Heart right ventricle (tissue), 16 donors: ENCODE measurements at regions of chr6 and their contacts with region 1.

Region 1: DNA sequence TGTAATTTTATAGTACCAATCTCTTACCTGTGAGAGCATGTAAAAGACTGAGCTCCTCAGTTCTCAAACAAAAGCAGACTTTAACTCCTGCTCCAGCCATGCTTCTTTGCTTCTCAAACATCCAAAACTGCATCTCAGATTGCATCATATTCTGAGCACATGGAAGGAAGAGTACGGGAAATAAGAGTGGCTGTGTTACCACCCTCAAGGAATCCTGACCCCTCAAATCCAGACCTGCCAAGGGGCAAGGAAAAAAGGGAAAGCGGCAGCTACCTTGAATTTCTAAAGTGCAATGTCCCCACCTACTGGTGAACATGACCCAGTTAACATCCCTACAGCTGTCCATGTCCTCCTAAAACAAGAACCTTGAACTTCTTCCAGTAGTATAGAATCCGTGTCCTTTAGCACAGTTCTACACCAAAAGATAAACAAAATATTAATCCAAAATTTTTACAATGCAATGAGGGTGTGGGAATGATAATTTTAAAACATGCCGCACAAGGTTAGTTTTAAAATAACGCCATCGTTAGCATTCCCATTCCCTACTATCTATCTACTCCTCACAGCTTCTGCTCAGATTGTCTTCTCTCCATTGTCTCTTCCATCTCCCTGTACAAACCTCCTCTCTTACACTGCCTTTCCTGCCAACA is 34.1 kb upstream of the HLA-DQB1 start:
- DNase-seq: peak in 1 of 2 donors; percentile 58
- ATAC-seq: peak in 7 of 8 donors; percentile 61 to 92 (median 82)
- H3K4me3 ChIP-seq: no peak overlapping the region
- H3K27ac ChIP-seq: no peak overlapping the region
- H3K4me1 ChIP-seq: no peaks in the 10 kb centered on the region
- H3K27me3 ChIP-seq: peaks cover 0 to 48% (median 32%) of the 10 kb centered on the region in 7 donors
- CTCF ChIP-seq: peak in 8 of 9 donors; percentile 56 to 76 (median 71)

Region 2: GRCh38 chr6:32255199-32256153 is 445.0 kb before region 1 on chr6:
- intact Hi-C with region 1: loop called in 1 of 10 experiments (anchors 10 kb)
- DNase-seq: peak; percentile 71 to 79
- ATAC-seq: peak; percentile 91 to 99 (median 98)
- H3K4me3 ChIP-seq: peak overlapping the region in 9 of 10 donors; percentile 11 to 48 (median 37)
- H3K27ac ChIP-seq: peak overlapping the region; percentile 64 to 94 (median 84)
- H3K4me1 ChIP-seq: peaks cover 0 to 32% (median 10%) of the 10 kb centered on the region in 9 donors
- H3K27me3 ChIP-seq: peaks cover 0 to 10% (median 0%) of the 10 kb centered on the region in 7 donors
- CTCF ChIP-seq: peak; percentile 40 to 90 (median 79)

Region 3: GRCh38 chr6:32413427-32414047 is 287.0 kb before region 1 on chr6:
- intact Hi-C with region 1: loop called in 9 of 10 experiments (anchors 2 to 5 kb)
- DNase-seq: peak; percentile 72 to 84
- ATAC-seq: peak; percentile 57 to 90 (median 81)
- H3K4me3 ChIP-seq: no peak overlapping the region
- H3K27ac ChIP-seq: no peak overlapping the region
- H3K4me1 ChIP-seq: peaks cover 0 to 12% (median 4%) of the 10 kb centered on the region in 9 donors
- H3K27me3 ChIP-seq: peaks cover 0 to 74% (median 54%) of the 10 kb centered on the region in 7 donors
- CTCF ChIP-seq: peak; percentile 85 to 98 (median 96)

Region 4: DNA sequence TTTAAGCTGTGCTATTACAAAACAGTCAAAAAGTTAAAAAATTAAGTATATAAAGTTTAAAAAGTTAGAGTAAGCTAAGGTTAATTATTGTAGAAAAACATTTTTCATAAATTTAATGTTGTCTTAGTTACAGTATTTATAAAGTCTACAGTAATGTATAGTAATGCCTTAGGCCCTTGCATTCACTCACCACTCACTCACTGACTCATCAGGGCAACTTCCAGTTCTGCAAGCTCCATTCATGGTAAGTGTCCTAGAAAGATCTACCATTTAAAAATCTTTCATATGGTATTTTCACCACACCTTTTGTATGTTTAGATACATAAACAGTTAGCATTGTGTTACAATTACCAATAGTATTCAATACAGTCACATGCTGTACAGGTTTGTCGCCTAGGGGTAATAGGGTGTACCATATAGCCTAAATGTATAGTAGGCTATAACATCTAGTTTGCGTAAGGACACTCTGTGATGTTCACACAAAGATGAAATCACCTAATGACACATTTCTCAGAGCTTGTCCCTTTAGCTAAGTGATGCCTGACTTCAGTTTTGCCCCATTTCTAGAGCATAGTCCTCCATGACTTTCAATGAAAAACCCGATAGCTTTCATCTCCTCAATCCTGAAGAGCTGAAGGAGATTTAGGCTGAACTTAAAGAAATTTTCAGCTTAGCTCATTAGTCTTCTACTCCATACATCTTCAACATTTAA is 275.8 kb before region 1 on chr6:
- intact Hi-C with region 1: loop called in 4 of 10 experiments (anchors 5 kb)
- DNase-seq: no peak
- ATAC-seq: no peak
- H3K4me3 ChIP-seq: no peak overlapping the region
- H3K27ac ChIP-seq: no peak overlapping the region
- H3K4me1 ChIP-seq: no peaks in the 10 kb centered on the region
- H3K27me3 ChIP-seq: peaks cover 0 to 22% (median 14%) of the 10 kb centered on the region in 7 donors
- CTCF ChIP-seq: no peak

Region 5: DNA sequence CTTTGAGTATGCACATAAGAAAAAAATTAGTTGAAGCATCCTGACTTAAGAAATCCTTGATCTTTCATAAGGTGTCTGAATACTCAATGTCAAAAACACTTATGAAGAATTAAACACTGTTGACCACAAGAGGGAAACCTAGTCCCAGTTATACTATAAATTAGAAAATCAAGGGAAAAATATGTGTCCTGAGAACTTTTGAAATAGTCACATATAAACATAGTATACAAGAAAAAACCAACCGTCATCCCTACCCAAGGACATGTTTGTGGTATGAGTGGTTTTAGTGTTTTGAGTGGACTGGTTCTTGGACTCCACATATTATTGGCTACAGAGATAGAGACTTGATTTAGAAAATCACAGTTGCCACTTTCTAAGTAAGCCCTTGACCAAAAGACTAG is 268.5 kb before region 1 on chr6:
- intact Hi-C with region 1: loop called in 7 of 10 experiments (anchors 1 to 5 kb)
- DNase-seq: no peak
- ATAC-seq: no peak
- H3K4me3 ChIP-seq: no peak overlapping the region
- H3K27ac ChIP-seq: no peak overlapping the region
- H3K4me1 ChIP-seq: peaks cover 0 to 4% (median 0%) of the 10 kb centered on the region in 9 donors
- H3K27me3 ChIP-seq: peaks cover 0 to 8% (median 0%) of the 10 kb centered on the region in 7 donors
- CTCF ChIP-seq: peak in 8 of 9 donors; percentile 17 to 67 (median 60)

Region 6: GRCh38 chr6:32622545-32623401 is 77.7 kb before region 1 on chr6:
- intact Hi-C with region 1: loop called in 2 of 10 experiments (anchors 5 to 10 kb)
- DNase-seq: peak in 1 of 2 donors; percentile 22
- ATAC-seq: peak in 7 of 8 donors; percentile 67 to 94 (median 81)
- H3K4me3 ChIP-seq: no peak overlapping the region
- H3K27ac ChIP-seq: peak overlapping the region in 1 of 10 donors; percentile 77
- H3K4me1 ChIP-seq: peaks cover 0 to 18% (median 0%) of the 10 kb centered on the region in 9 donors
- H3K27me3 ChIP-seq: no peaks in the 10 kb centered on the region
- CTCF ChIP-seq: peak in 8 of 9 donors; percentile 15 to 67 (median 34)

Region 7: DNA sequence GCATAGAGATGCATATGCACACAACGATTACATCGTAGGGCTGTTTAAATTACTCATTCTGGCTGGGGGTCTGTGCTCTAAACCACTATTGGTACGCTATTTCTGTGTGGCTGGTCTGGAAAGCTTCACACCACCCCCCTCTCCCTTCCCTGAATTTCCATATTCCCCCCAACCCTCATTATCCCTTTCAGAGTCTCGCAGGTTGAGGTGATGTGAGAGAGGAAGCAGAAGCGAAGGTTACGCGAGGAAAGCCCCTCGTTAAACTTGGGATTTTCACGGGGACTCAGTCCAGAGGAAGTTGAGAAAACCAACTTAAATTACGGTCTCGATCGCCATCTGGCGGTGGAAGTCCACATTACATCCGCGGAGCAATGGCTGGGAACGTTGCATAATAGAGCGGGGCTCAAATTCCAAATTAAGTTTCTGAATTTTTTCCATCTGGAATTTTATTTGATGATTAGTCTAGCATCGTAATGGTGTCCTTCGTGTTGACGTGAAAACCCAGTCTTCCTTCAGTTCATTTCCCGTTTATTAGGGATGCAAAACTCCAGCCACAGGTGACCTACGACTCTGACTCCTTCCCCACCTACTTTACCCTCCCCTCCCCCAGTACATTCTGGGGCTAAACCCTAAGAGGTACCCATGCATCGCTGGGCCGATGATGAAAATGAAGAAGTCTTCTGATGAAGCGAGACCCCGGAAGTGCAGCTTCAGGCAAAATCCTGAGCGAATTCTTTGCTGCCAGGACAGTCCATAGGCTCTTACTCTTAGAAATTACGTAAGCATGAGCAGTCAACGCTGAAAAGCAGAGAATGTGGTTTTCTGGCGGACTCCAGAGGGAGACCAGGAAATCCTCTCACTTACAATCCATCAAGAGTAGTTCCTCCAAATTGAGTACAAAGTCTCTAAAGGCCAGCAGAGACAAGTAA is 96.6 kb after region 1 on chr6:
- intact Hi-C with region 1: loop called in 2 of 10 experiments (anchors 10 kb)
- DNase-seq: peak; percentile 73 to 78
- ATAC-seq: peak; percentile 71 to 90 (median 76)
- H3K4me3 ChIP-seq: peak overlapping the region in 4 of 10 donors; percentile 18 to 30 (median 26)
- H3K27ac ChIP-seq: peak overlapping the region in 1 of 10 donors; percentile 7
- H3K4me1 ChIP-seq: peaks cover 0 to 38% (median 3%) of the 10 kb centered on the region in 9 donors
- H3K27me3 ChIP-seq: peaks cover 0 to 91% (median 41%) of the 10 kb centered on the region in 7 donors
- CTCF ChIP-seq: peak; percentile 74 to 90 (median 86)